ENCODE measurements at regions of chr2 and their contacts with region 1.

Region 1: DNA sequence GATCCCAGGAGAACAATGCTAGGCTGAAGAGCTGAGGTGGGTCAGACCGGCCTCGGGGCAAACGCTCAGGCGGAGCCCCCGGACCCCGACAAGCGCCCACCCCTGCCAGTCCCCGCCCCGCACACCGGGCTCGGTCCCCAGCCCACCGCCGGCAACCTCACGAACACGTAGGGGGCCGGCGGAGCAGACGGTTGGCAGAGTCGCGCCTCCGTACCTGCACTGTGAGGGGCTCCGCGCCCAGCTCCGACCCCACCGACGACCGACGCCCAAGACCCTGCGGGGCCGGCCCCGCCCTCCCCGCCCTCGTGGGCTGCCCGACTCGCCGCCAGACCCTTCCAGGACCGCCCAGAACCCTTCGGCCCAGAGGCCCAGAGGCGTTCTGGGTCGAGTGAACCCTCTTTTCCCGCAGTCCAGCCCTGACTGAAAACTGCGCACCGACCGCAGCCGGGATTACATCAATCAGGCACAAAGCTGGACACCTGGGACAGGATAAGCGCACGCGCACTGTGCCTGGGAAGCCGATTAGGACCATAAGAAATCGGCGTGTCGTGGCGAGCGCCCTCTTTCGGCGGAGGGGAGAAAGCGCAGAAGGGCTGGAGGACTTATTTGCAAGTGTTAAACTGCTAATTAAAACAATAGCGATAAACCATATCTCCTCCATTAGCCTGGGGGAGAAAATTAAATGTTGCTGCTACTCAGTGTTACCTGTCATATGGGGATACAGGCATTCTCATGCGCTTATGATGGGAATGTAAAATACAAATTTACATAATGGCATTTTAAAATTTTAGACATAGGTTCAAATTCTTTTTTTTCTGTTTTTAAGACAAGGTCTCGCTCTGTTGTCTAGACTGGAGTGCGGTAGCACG is 11.7 kb upstream of the DCTN1 start:
- DNase-seq: peak; percentile 98
- H3K4me3 Mint-ChIP-seq: peak overlapping the region; percentile 92
- H3K27ac Mint-ChIP-seq: peak overlapping the region; percentile 96
- H3K4me1 Mint-ChIP-seq: peaks cover 4% of the 10 kb centered on the region
- H3K27me3 Mint-ChIP-seq: no peaks in the 10 kb centered on the region

Region 2: GRCh38 chr2:73931531-73932500 is 460.0 kb before region 1 on chr2:
- CTCF ChIA-PET with region 1: no interaction called
- intact Hi-C with region 1: loop called (anchors 5 kb)
- DNase-seq: peak; percentile 74
- H3K4me3 Mint-ChIP-seq: peak overlapping the region; percentile 12
- H3K27ac Mint-ChIP-seq: peak overlapping the region; percentile 82
- H3K4me1 Mint-ChIP-seq: peaks cover 75% of the 10 kb centered on the region
- H3K27me3 Mint-ChIP-seq: no peaks in the 10 kb centered on the region

Region 3: GRCh38 chr2:74162951-74163350 is 228.9 kb before region 1 on chr2:
- CTCF ChIA-PET with region 1: no interaction called
- intact Hi-C with region 1: no loop called
- DNase-seq: no peak
- H3K4me3 Mint-ChIP-seq: no peak overlapping the region
- H3K27ac Mint-ChIP-seq: peak overlapping the region; percentile 30
- H3K4me1 Mint-ChIP-seq: peaks cover 8% of the 10 kb centered on the region
- H3K27me3 Mint-ChIP-seq: no peaks in the 10 kb centered on the region

Region 4: DNA sequence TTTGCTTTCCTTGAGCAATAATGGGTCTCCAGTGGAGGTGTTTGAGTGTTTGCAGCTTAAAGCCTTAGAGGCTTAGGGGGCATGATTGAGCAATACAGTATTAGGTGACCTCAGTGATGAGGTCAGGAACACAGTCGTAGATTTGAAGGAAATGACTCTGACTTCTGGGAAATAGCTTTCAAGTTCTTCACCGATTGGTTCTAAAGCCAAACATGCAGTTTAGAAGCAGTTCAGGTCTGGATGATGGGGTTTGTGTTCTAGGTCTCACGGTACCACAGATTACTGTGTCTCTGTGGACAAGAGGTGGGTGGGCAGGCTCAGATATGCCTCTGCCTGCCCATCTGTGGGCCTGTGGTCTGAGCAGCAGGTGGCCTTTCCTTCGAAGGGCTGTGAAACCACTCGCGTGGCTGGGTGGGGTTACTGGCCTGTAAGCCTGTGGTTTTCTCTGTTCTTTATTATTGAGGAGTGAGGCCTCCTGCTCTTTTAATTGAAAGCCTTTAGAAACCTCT is 185.6 kb before region 1 on chr2:
- CTCF ChIA-PET with region 1: no interaction called
- intact Hi-C with region 1: loop called (anchors 5 kb)
- DNase-seq: peak; percentile 60
- H3K4me3 Mint-ChIP-seq: peak overlapping the region; percentile 47
- H3K27ac Mint-ChIP-seq: peak overlapping the region; percentile 93
- H3K4me1 Mint-ChIP-seq: peaks cover 69% of the 10 kb centered on the region
- H3K27me3 Mint-ChIP-seq: no peaks in the 10 kb centered on the region

Region 5: GRCh38 chr2:74250189-74250631 is 141.6 kb before region 1 on chr2:
- CTCF ChIA-PET with region 1: interaction called, 14 read pairs
- intact Hi-C with region 1: loop called (anchors 1 kb)
- DNase-seq: peak; percentile 68
- H3K4me3 Mint-ChIP-seq: no peak overlapping the region
- H3K27ac Mint-ChIP-seq: no peak overlapping the region
- H3K4me1 Mint-ChIP-seq: peaks cover 2% of the 10 kb centered on the region
- H3K27me3 Mint-ChIP-seq: no peaks in the 10 kb centered on the region

Region 6: GRCh38 chr2:74267068-74267467 is 124.7 kb before region 1 on chr2:
- CTCF ChIA-PET with region 1: interaction called, 3 read pairs
- intact Hi-C with region 1: loop called (anchors 1 kb)
- DNase-seq: peak; percentile 82
- H3K4me3 Mint-ChIP-seq: no peak overlapping the region
- H3K27ac Mint-ChIP-seq: peak overlapping the region; percentile 53
- H3K4me1 Mint-ChIP-seq: peaks cover 12% of the 10 kb centered on the region
- H3K27me3 Mint-ChIP-seq: no peaks in the 10 kb centered on the region

Region 7: GRCh38 chr2:74414881-74415761 is 23.3 kb after region 1 on chr2:
- CTCF ChIA-PET with region 1: interaction called, 12 read pairs
- intact Hi-C with region 1: no loop called
- DNase-seq: peak; percentile 38
- H3K4me3 Mint-ChIP-seq: peak overlapping the region; percentile 72
- H3K27ac Mint-ChIP-seq: no peak overlapping the region
- H3K4me1 Mint-ChIP-seq: peaks cover 14% of the 10 kb centered on the region
- H3K27me3 Mint-ChIP-seq: no peaks in the 10 kb centered on the region

Region 8: DNA sequence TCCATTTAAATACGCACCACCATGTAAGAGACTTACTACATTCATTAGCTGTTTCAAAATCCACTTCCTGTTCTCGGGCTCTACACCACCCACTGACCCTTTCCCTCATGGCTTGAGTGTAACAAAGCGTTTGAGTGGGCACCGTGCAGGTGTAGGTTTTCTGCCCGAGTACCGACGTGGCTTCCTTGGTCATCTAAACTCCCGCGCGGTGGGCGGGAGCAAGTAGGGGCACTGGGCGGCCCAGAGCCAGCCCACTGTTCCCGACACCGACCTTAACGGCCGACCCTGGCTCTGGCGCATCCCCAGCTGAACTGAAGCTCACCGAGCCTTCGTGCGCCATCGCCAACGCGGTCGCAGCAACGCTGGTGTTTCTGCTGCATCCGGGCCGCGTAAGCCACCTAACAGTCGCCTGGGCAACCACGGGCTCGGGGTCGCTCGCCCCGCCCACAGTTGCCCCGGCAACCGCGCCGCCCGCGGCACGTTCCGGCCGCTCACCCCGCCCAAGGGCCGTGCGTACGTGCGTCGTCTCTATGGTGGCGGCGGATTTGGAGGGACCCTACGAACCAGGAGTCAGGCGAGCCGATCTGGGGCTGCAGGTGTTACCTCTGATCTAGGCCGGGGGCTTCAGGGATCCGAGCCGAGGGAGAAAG is 29.5 kb after region 1 on chr2 and contains the starts of genes C2orf81 and WDR54:
- CTCF ChIA-PET with region 1: interaction called, 9 read pairs
- intact Hi-C with region 1: loop called (anchors 1 kb)
- DNase-seq: peak; percentile 90
- H3K4me3 Mint-ChIP-seq: peak within 1 kb of the TSS; percentile 99
- H3K27ac Mint-ChIP-seq: peak within 1 kb of the TSS; percentile 88
- H3K4me1 Mint-ChIP-seq: peaks cover 24% of the 10 kb centered on the region
- H3K27me3 Mint-ChIP-seq: no peaks in the 10 kb centered on the region
- total RNA-seq, gene C2orf81: 2.6 to 3.4 TPM
- total RNA-seq, gene WDR54: 67.2 to 70.8 TPM